Pancreas (tissue), 10 donors: ENCODE measurements at regions of chrX and their contacts with region 1.

Region 1: GRCh38 chrX:10189317-10190268 is 32.8 kb downstream of the CLCN4 start:
- DNase-seq: peak; percentile 45 to 82 (median 74)
- ATAC-seq: peak; percentile 93 to 98 (median 96)
- H3K4me3 ChIP-seq: no peak overlapping the region
- H3K27ac ChIP-seq: peak overlapping the region in 1 of 4 donors; percentile 20
- H3K4me1 ChIP-seq: no peaks in the 10 kb centered on the region
- H3K27me3 ChIP-seq: no peaks in the 10 kb centered on the region
- CTCF ChIP-seq: peak; percentile 69 to 86 (median 77)

Region 2: GRCh38 chrX:9656277-9656676 is 533.3 kb before region 1 on chrX:
- intact Hi-C with region 1: no loop called
- DNase-seq: peak in 2 of 6 donors; percentile 9 to 20
- ATAC-seq: peak; percentile 38 to 92 (median 74)
- H3K4me3 ChIP-seq: no peak overlapping the region
- H3K27ac ChIP-seq: no peak overlapping the region
- H3K4me1 ChIP-seq: no peaks in the 10 kb centered on the region
- H3K27me3 ChIP-seq: no peaks in the 10 kb centered on the region
- CTCF ChIP-seq: no peak

Region 3: DNA sequence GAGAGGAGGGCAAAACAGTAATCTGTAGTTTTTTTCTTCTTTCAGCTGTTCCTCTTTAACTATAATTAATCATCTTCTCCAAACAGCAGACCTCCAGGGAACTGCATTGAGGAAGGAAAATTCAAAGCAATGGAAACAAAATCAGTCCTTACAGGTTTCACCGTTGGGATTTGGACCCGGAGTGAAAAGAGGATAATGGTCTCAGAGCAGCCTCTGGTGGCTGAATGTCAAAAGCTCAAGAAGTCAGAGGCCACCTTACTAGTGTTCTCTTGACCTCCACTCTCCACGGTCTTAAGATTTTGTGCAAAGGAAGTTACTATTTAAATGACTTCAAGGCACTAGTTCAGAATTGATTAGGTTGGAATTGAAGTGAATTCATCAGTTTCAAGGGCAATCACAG is 446.7 kb after region 1 on chrX:
- intact Hi-C with region 1: loop called in 1 of 3 experiments (anchors 10 kb)
- DNase-seq: peak in 1 of 6 donors; percentile 50
- ATAC-seq: peak; percentile 63 to 91 (median 82)
- H3K4me3 ChIP-seq: no peak overlapping the region
- H3K27ac ChIP-seq: peak overlapping the region in 1 of 4 donors; percentile 3
- H3K4me1 ChIP-seq: no peaks in the 10 kb centered on the region
- H3K27me3 ChIP-seq: no peaks in the 10 kb centered on the region
- CTCF ChIP-seq: peak in 2 of 4 donors; percentile 34 to 37

Region 4: GRCh38 chrX:10722851-10723250 is 533.3 kb after region 1 on chrX:
- intact Hi-C with region 1: loop called in 1 of 3 experiments (anchors 10 kb)
- DNase-seq: peak in 4 of 6 donors; percentile 2 to 59 (median 27)
- ATAC-seq: peak in 3 of 4 donors; percentile 83 to 87 (median 85)
- H3K4me3 ChIP-seq: no peak overlapping the region
- H3K27ac ChIP-seq: no peak overlapping the region
- H3K4me1 ChIP-seq: no peaks in the 10 kb centered on the region
- H3K27me3 ChIP-seq: no peaks in the 10 kb centered on the region
- CTCF ChIP-seq: peak; percentile 51 to 78 (median 64)

Region 5: GRCh38 chrX:11137543-11138139 is 948.0 kb after region 1 on chrX:
- intact Hi-C with region 1: loop called in 2 of 3 experiments (anchors 10 kb)
- DNase-seq: no peak
- ATAC-seq: peak in 3 of 4 donors; percentile 28 to 56 (median 42)
- H3K4me3 ChIP-seq: no peak overlapping the region
- H3K27ac ChIP-seq: no peak overlapping the region
- H3K4me1 ChIP-seq: no peaks in the 10 kb centered on the region
- H3K27me3 ChIP-seq: peaks cover 0 to 23% (median 0%) of the 10 kb centered on the region in 4 donors
- CTCF ChIP-seq: peak; percentile 51 to 81 (median 68)